Ovary (tissue), 10 donors: ENCODE measurements at regions of chr3 and their contacts with region 1.

Region 1: DNA sequence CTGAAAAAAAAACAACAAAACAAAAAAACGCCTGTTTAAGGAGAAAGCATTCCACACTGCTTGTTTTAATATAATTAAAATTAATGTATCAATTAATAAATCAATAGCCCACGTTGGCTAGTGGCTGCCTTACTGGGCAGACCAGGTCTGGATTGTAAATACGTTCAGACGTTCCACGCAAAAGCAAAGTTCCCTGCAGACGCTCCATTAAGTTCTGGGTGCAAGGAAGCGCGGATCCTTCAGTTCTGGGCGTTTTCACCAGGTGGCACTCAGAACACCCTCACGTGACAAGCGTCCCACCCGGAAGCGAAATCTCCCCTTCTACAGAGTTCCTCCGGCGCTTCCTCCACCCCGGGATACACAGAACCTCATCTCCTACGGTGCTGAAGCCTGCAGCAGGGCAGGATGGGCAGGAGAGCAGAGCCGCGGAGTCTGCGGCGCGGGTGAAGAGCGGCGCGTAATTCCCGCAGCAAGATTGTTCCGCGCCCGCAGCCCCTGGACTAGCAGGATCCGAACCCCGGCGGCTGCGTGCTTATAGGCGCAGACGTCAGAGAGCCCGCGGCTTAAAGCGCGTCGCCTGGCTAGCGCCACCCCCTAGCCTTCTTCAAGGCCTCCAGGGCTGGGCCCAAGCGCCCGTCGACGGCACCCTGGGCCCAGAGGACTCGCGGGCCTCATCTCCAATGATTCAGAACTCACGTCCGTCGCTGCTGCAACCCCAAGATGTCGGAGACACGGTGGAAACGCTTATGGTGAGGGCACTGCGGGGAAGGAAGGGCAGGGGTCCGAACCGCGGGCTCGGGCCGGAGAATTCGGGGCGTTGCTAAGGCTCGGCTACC is at the start of gene SLC25A38:
- DNase-seq: peak; percentile 74 to 82 (median 78)
- H3K4me3 ChIP-seq: peak within 1 kb of the TSS; percentile 93
- H3K27ac ChIP-seq: peak within 1 kb of the TSS; percentile 88 to 91
- H3K4me1 ChIP-seq: peaks cover 10% of the 10 kb centered on the region
- H3K27me3 ChIP-seq: no peaks in the 10 kb centered on the region
- CTCF ChIP-seq: peak in 2 of 3 donors; percentile 28 to 31
- EP300 ChIP-seq: no peak
- POLR2A ChIP-seq: peak; percentile 66
- total RNA-seq, gene SLC25A38: 28.8 to 38.6 (median 33.9) TPM

Region 2: DNA sequence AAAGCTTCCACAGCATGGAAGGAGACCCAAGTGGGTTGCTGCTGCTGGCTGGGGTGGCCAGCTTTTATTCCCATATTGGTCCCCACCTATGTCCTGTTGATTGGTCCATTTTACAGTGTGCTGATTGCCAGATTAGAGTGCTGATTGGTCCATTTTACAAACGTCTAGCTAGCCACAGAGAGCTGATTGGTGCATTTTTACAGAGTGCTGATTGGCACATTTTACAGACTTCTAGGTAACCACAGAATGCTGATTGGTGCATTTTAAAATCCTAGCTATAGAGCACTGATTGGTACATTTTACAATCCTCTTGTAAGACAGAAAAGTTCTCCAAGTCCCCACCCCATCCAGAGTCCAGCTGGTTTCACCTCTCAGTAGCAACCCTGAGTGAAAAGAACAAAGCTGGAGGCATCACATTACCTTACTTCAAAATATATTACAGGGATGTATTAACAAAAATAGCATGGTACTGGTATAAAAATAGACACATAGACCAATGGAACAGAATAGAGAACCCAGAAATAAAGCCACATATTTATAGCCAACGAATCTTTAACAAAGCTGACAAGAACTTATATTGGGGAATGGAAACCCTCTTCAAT is 937.1 kb before region 1 on chr3:
- intact Hi-C with region 1: loop called in 1 of 4 experiments (anchors 10 kb)
- DNase-seq: no peak
- H3K4me3 ChIP-seq: no peak overlapping the region
- H3K27ac ChIP-seq: no peak overlapping the region
- H3K4me1 ChIP-seq: no peaks in the 10 kb centered on the region
- H3K27me3 ChIP-seq: no peaks in the 10 kb centered on the region
- CTCF ChIP-seq: no peak
- EP300 ChIP-seq: no peak
- POLR2A ChIP-seq: no peak

Region 3: DNA sequence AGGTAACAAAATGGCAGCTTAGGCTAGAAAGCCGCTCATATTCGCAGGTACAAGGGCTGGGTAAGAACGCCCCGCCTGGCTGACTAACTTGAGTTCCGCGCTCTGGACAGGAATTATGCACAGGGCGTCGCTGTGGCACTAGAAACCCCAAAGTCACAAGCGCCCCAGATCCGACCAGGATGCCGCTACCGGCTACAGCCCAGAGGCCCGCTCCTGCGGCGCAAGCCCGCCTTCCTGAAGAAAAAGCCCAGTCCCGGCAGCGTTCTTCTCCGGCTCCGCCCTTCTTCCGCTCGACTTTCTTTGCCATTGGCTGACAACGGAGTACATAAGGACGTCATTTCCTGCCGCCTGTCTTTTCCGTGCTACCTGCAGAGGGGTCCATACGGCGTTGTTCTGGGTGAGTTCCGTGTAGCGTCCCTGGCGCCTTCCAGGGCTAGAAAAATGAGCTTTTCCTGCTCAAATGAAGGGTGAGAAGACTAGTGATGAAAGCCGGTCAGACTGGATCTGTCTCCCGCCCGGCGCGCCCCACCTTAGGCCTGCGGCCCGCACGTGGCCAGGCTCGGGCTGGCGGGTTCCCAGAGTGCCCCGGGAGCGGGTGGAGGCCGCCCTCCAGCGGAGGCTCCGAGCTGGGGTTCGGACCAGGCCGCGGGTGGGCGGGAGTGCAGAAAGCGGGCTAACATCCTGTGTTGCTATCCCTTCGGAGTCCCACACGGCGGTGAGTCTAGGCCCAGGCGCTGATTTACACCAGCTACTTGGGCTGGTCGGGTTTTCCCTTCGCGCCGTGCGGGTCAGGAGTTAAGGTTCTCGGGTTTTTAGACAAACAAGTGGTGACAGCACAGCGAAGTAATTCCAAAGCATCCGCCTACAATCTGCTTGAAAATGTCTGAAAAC is 23.4 kb after region 1 on chr3 and contains the start of gene RPSA:
- intact Hi-C with region 1: loop called in 1 of 4 experiments (anchors 1 kb)
- DNase-seq: peak; percentile 86 to 94 (median 93)
- H3K4me3 ChIP-seq: peak within 1 kb of the TSS; percentile 79
- H3K27ac ChIP-seq: peak within 1 kb of the TSS; percentile 53 to 85
- H3K4me1 ChIP-seq: peaks cover 2% of the 10 kb centered on the region
- H3K27me3 ChIP-seq: no peaks in the 10 kb centered on the region
- CTCF ChIP-seq: peak in 2 of 3 donors; percentile 21 to 47
- EP300 ChIP-seq: no peak
- POLR2A ChIP-seq: peak; percentile 82
- total RNA-seq, gene RPSA: 1,337 to 2,779 (median 1,617) TPM